ENCODE measurements at regions of chr15 and their contacts with region 1.

Region 1: GRCh38 chr15:75042730-75043508 is 19.5 kb downstream of the PPCDC start:
- DNase-seq: peak; percentile 93 to 99
- H3K4me3 ChIP-seq: no peak overlapping the region; the same call in 1 of the 2 replicates
- H3K27ac ChIP-seq: peak overlapping the region; percentile 99
- H3K4me1 ChIP-seq: peaks cover 82% of the 10 kb centered on the region
- H3K27me3 ChIP-seq: no peaks in the 10 kb centered on the region
- CTCF ChIP-seq: peak; percentile 73

Region 2: DNA sequence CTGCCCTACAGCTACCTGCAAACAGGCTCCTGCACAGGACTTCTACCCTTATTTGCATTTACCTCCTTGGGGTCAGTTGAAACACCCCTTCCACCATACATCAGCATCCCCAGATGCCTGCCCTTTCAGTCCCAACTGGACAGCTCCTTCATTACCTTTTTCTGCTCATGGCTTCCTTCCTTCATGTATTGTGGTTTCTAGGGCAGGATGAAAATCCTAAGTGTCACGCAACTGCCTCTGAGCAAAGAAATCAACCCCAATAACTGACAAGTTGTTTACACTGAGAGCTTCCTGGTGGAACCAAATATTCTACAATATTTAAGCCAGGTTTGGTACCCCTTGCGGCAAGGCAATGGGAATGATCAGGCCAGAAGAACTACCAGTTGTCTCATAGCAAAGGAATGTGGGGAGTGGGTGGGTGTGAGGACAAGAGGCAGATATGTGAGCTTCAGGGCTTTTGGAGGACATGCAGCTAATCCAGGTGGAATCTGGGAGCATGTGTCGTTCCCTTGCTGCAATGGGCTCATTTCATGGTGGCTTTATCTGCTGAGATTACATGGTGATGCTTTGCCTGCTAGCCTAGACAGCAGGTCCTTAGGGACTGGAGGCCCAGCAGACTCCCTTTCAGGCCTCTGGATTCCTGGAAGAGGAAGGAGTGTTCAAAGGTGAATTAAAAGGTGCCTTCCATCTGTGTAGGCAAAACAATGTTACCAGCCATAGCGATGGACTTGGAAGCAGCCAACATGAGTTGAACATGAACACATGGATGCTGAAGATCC is 15.4 kb after region 1 on chr15:
- CTCF ChIA-PET with region 1: interaction called, 13 read pairs
- POLR2A ChIA-PET with region 1: interaction called, 5 read pairs
- intact Hi-C with region 1: loop called (anchors 1 kb)
- DNase-seq: peak; percentile 66 to 85
- H3K4me3 ChIP-seq: no peak overlapping the region
- H3K27ac ChIP-seq: peak overlapping the region; percentile 90
- H3K4me1 ChIP-seq: peaks cover 34% of the 10 kb centered on the region
- H3K27me3 ChIP-seq: no peaks in the 10 kb centered on the region
- CTCF ChIP-seq: no peak

Region 3: DNA sequence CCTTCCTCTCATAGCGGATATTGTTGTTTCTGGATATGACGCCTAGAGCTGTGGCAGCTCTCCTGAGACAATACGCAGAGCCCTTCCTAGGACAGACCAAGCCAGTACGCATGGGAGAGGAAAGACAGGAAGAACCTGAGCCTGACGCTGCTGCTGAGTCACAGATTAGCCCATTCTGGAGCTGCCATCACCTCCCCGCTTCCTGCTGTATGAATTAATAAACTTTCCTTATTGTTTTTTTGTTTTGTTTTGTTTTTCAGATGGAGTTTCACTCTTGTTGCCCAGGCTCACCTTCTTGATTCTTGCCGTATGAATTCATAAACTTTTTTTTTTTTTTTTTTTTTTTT is 47.4 kb after region 1 on chr15:
- CTCF ChIA-PET with region 1: interaction called, 4 read pairs
- POLR2A ChIA-PET with region 1: interaction called, 13 read pairs
- intact Hi-C with region 1: no loop called
- DNase-seq: peak; percentile 67 to 79
- H3K4me3 ChIP-seq: no peak overlapping the region
- H3K27ac ChIP-seq: peak overlapping the region; percentile 63
- H3K4me1 ChIP-seq: peaks cover 28% of the 10 kb centered on the region
- H3K27me3 ChIP-seq: no peaks in the 10 kb centered on the region
- CTCF ChIP-seq: no peak

Region 4: DNA sequence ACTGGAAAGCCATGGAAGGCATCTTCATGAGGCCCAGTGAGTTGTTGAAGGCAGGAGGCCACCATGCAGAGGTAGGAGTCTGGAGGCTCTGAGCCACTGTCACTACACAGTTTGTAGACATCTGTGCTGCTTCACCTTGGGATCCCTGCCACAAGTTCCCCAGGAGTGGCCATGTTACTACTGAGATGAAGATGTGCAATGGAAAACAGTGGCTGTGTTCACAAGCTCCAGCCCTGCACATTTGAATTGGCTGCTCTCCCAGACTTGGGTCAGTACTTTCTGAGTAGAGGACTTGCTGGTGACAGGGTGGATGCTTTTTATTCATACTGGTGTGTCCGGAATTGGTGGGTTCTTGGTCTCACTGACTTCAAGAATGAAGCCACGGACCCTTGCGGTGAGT is 71.9 kb after region 1 on chr15:
- CTCF ChIA-PET with region 1: no interaction called
- POLR2A ChIA-PET with region 1: no interaction called
- intact Hi-C with region 1: no loop called
- DNase-seq: no peak
- H3K4me3 ChIP-seq: no peak overlapping the region
- H3K27ac ChIP-seq: no peak overlapping the region
- H3K4me1 ChIP-seq: peaks cover 31% of the 10 kb centered on the region
- H3K27me3 ChIP-seq: no peaks in the 10 kb centered on the region
- CTCF ChIP-seq: no peak

Region 5: GRCh38 chr15:75171408-75171807 is 128.5 kb after region 1 on chr15:
- CTCF ChIA-PET with region 1: interaction called, 5 read pairs
- POLR2A ChIA-PET with region 1: interaction called, 4 read pairs
- intact Hi-C with region 1: loop called (anchors 1 kb)
- DNase-seq: peak in 1 of 2 experiments; percentile 62
- H3K4me3 ChIP-seq: no peak overlapping the region
- H3K27ac ChIP-seq: peak overlapping the region; percentile 72
- H3K4me1 ChIP-seq: peaks cover 80% of the 10 kb centered on the region
- H3K27me3 ChIP-seq: no peaks in the 10 kb centered on the region
- CTCF ChIP-seq: no peak

Region 6: GRCh38 chr15:75666823-75667501 is 624.0 kb after region 1 on chr15:
- CTCF ChIA-PET with region 1: no interaction called
- POLR2A ChIA-PET with region 1: no interaction called
- intact Hi-C with region 1: loop called (anchors 5 kb)
- DNase-seq: peak; percentile 89 to 98
- H3K4me3 ChIP-seq: no peak overlapping the region; the same call in 1 of the 2 replicates
- H3K27ac ChIP-seq: peak overlapping the region; percentile 99
- H3K4me1 ChIP-seq: peaks cover 100% of the 10 kb centered on the region
- H3K27me3 ChIP-seq: no peaks in the 10 kb centered on the region
- CTCF ChIP-seq: no peak

Measured in PC-9 (cell line).